GM23248 (cell line): ENCODE measurements at regions of chr10 and their contacts with region 1.

Region 1: DNA sequence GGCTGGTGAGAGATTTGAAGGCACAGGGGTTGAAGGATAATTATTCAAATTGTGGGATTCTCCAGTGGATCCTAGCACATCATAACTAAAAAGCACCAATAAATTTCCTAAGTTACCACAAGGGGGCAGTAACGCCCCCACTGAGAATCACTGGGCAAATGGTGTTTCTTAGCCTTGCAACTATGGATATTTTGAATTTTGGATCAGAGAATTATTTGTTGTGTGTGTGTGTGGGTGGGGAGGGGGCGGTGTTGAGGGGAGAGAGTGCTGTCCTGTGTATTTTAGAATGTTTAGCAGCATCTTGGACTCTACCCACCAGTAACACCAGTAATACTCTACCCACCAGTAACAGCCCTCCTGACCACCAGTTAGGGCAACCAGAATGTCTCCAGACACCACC is 63.3 kb upstream of the PRKG1 start:
- DNase-seq: peak; percentile 62
- H3K4me3 ChIP-seq: no peak overlapping the region
- H3K27ac ChIP-seq: no peak overlapping the region
- H3K4me1 ChIP-seq: peaks cover 29% of the 10 kb centered on the region
- H3K27me3 ChIP-seq: no peaks in the 10 kb centered on the region

Region 2: DNA sequence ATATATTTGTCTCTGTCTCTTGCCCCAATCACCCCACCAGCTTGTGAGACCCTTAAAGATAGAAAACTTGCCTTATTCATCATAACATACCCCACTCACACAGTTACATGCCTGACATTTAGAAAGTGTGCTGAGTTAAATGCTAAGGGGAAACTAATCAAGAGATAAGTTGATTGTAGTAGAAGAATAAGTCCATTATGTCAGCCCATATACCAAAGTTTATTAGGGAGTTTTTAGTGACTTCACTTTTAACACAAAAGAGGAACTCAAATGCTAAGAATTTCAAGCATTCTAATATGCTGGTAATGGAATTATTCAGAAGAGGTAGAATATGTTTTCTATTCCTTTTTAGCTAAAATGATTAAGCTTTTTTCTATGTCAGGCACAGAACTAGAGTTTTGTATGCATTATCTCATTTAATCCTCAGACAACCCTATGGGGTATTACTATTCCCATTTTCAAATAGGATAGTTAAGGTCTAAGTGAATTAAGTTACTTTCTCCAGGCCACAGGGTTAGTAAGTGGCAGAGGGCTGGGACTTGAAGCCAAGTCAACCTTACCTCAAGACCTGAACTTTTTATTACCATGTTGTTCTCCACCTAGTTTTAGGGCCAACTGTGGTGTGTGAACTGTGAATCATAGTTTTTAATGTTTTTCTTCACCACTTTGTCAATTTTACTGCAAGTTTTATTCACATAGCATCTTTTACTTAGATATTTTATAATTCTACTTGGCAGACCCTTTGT is 779.3 kb before region 1 on chr10:
- in situ Hi-C with region 1: no loop called
- DNase-seq: no peak
- H3K4me3 ChIP-seq: no peak overlapping the region
- H3K27ac ChIP-seq: no peak overlapping the region
- H3K4me1 ChIP-seq: no peaks in the 10 kb centered on the region
- H3K27me3 ChIP-seq: peaks cover 42% of the 10 kb centered on the region

Region 3: GRCh38 chr10:52215745-52216361 is 1204.9 kb after region 1 on chr10:
- in situ Hi-C with region 1: loop called (anchors 25 kb)
- DNase-seq: peak; percentile 75
- H3K4me3 ChIP-seq: no peak overlapping the region
- H3K27ac ChIP-seq: no peak overlapping the region
- H3K4me1 ChIP-seq: peaks cover 5% of the 10 kb centered on the region
- H3K27me3 ChIP-seq: no peaks in the 10 kb centered on the region